HepG2 (cell line): ENCODE measurements at regions of chr16 and their contacts with region 1.

Region 1: DNA sequence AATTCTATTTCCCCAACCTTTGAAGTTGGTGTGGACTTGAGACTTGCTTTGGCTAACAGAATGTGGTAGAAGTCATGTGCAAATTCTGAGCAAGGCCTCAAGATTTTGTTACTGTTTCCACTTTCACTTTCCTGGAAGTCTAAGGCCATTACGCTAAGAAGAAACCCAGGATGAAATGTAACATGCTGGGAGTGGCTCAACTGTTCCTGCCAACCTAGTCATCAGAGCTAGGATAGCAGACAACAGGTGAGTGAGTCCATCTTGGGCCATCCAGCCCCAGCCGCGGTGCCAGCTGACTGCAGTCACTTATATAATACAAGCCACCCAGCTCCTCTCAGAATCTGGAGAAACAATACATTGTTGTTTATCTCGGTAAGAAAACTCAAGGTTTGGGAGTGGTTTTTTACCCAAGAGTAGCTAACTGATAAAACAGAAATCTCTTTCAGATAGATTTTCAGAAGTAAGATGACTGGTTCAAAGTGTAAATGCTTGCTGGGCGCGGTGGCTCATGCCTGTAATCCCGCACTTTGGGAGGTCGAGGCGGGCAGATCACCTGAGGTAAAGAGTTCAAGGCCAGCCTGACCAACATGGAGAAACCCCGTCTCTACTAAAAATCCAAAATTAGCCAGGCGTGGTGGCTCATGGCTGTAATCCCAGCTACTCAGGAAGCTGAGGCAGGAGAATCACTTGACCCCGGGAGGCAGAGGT is 10.7 kb upstream of the STX4 start:
- DNase-seq: peak; percentile 30
- ATAC-seq: peak; percentile 21; the same call in 2 of the 3 replicates
- H3K4me3 ChIP-seq: peak overlapping the region in 2 of 3 experiments; percentile 19 to 43; a peak in 3 of 6 replicates
- H3K27ac ChIP-seq: peak overlapping the region; percentile 19
- H3K4me1 ChIP-seq: peaks cover 51% of the 10 kb centered on the region
- H3K27me3 ChIP-seq: peaks cover 0 to 2% of the 10 kb centered on the region in 2 experiments; a peak in 1 of 5 replicates
- CTCF ChIP-seq: no peak
- EP300 ChIP-seq: no peak
- POLR2A ChIP-seq: no peak
- RAD21 ChIP-seq: no peak

Region 2: DNA sequence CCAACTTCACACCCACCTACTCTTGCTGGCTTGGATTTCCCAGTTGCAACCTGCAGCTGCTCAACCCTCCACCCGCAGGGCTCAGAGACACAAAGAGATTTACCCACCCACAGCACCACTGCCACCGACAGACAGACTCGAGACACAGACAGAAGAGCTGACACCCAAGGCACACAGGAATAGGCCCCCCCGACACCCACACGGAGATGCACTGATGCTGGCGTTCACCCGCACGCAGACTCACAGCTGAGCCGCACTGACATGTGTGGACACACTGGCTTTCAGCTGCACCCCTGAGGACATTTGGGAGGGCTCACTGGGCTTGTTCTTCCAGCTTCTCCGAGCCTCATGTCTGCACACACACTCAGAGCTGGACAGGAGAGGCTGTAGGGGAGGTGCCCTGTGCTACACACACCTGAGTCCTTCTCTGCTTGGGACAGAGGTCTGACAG is 20.4 kb before region 1 on chr16:
- CTCF ChIA-PET with region 1: no interaction called
- POLR2A ChIA-PET with region 1: interaction called, 41 read pairs
- in situ Hi-C with region 1: no loop called
- intact Hi-C with region 1: loop called (anchors 2 kb)
- DNase-seq: no peak
- ATAC-seq: peak; percentile 1
- H3K4me3 ChIP-seq: peak overlapping the region; percentile 8 to 73 (median 41)
- H3K27ac ChIP-seq: peak overlapping the region; percentile 50
- H3K4me1 ChIP-seq: peaks cover 95% of the 10 kb centered on the region
- H3K27me3 ChIP-seq: no peaks in the 10 kb centered on the region; a peak in 2 of 5 replicates
- CTCF ChIP-seq: peak; percentile 0; the same call in 1 of the 2 replicates
- EP300 ChIP-seq: no peak
- POLR2A ChIP-seq: no peak
- RAD21 ChIP-seq: no peak

Region 3: DNA sequence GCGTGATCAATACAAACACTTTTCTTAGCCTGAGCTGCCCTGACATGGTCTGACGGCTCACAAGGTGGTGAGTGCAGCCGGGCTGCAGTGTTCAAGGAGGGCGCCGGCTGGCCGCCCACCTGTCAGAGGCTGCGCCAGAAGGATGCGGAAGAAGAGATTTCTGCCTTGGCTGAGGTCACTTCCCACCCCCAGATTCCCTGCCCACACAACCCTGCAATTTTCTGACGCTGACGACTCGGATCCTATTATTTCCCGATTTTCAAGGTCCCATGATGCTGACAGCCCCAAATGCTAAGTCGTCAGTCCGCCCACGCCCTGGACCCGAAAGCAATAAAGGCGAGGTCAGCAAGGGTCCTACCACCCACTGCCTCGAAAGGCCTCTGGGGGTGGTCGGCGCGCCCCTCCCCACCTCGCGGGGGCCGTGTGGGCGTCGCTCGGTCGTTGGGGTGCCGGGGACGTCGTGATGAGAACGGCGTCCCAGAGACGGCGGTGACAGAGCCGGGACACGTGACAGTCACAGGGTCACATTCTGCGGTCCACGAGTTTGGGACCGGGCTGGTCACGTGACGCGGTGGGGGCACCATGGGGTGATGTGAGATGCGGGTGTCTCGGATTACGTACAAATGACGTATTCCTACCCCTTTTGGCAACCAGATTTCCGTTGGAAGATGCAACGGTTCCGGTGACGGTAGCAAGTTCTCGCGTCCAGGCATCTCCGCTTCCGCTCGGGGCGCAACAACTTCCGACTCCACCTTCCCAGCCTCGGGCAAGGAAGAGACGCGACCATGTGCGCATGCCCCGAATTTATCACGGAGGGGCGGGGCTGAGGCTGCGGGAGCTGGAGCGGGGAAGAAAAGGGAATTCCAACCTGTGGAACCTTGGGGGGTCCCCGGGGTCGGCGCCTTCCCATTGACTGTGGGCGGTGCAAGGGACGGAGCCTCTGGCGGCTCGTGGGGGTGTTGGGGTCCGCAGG is 10.3 kb after region 1 on chr16 and contains the start of gene STX4:
- CTCF ChIA-PET with region 1: no interaction called
- POLR2A ChIA-PET with region 1: interaction called, 12 read pairs
- in situ Hi-C with region 1: no loop called
- intact Hi-C with region 1: no loop called
- DNase-seq: peak; percentile 94
- ATAC-seq: peak; percentile 88
- H3K4me3 ChIP-seq: peak within 1 kb of the TSS; percentile 86 to 99 (median 94)
- H3K27ac ChIP-seq: peak within 1 kb of the TSS; percentile 82
- H3K4me1 ChIP-seq: peaks cover 39% of the 10 kb centered on the region
- H3K27me3 ChIP-seq: no peaks in the 10 kb centered on the region; a peak in 1 of 5 replicates
- CTCF ChIP-seq: peak; percentile 16; the same call in 1 of the 2 replicates
- EP300 ChIP-seq: no peak
- POLR2A ChIP-seq: peak; percentile 60 to 75; a peak in 2 of 4 replicates
- RAD21 ChIP-seq: no peak
- total RNA-seq, gene STX4: 29.2 and 31.3 TPM in 2 replicates

Region 4: DNA sequence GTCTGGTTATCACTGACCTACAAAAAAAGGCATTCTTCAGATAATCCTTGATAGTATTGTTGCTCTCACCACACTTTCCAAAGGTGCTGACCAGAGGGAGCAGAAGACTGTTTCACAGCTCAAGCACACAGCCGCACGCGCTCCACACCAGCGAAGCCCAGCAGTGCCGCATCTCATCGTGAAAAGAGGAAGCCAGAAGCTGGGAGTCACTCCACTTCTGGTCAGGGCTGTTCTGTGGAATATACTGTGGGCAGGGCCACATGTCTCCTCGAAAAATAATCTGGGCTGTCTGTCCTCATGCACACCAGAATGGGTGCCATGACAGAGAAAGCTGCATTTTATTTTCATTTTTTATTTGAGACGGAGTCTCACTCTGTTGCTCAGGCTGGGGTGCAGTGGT is 134.4 kb after region 1 on chr16:
- CTCF ChIA-PET with region 1: interaction called, 3 read pairs
- POLR2A ChIA-PET with region 1: no interaction called
- in situ Hi-C with region 1: no loop called
- intact Hi-C with region 1: loop called (anchors 5 kb)
- DNase-seq: no peak
- ATAC-seq: peak; percentile 57
- H3K4me3 ChIP-seq: no peak overlapping the region
- H3K27ac ChIP-seq: no peak overlapping the region
- H3K4me1 ChIP-seq: peaks cover 8% of the 10 kb centered on the region
- H3K27me3 ChIP-seq: peaks cover 4 to 32% of the 10 kb centered on the region in 2 experiments; a peak in 4 of 5 replicates
- CTCF ChIP-seq: no peak
- EP300 ChIP-seq: no peak
- POLR2A ChIP-seq: no peak
- RAD21 ChIP-seq: no peak